ENCODE measurements at regions of chr1 and their contacts with region 1.

Region 1: DNA sequence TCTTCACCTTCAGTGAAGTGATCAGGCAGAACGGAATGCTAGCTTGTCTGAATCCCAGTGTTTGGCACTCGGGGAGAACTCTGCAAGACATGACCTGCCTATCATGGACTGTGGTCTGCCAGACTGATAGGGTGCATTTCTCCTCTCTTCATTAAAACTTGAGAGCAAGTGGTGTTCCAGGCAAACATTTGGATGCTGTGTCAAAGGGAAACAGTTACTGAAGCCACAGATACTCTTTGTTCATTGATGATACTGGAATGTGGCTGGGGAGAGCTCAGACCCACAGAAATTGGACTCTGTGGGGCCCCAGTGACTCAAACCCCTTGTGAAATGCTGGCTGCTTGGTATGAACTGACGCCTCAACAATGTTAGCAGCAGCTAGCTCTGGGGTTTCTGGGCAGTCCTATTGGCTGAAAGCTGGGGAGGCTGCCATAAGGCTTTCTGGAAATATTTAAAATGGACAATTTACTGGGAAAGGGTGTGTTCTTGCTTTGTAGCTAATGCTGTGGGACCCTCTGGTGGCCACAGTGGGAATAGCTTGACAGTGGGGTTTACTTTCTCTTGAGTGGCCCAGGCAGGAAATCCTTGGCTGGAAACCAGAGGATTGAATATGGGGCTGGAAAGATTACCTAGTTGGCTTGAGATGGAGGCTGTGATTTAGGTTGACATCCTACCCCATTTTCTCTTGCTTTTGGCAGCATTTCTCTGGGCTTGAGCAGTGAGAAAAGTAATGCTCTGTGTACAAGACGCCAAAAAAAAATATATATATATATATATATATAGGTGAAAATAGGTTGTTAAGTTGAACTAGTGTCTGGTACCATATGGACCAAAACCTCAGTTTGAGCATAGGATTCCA is 8.0 kb upstream of the S100A10 start:
- DNase-seq: peak; percentile 83
- H3K4me3 Mint-ChIP-seq: no peak overlapping the region
- H3K27ac Mint-ChIP-seq: no peak overlapping the region
- H3K4me1 Mint-ChIP-seq: peaks cover 11% of the 10 kb centered on the region
- H3K27me3 Mint-ChIP-seq: peaks cover 3% of the 10 kb centered on the region

Region 2: DNA sequence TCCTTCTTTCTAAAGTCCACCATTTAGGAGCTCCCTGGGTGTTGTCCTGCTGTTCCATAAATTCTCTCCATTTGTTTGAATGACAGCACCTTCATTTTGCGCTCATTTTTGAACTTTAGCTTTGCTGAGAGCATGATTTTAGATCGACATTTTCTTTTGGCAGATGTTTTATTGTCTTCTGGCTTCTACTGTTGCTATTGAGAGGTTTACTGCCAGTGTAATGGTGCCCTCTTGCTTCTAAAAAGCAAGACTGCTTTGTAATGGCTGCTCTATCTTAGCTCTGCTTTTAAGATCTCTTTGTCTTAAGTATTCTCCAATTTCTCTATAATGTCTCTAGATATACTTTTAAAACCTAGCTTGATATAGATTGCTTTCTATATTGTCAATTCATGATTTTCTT is 120.2 kb before region 1 on chr1:
- CTCF ChIA-PET with region 1: interaction called, 34 read pairs
- POLR2A ChIA-PET with region 1: no interaction called
- intact Hi-C with region 1: no loop called
- DNase-seq: no peak
- H3K4me3 Mint-ChIP-seq: no peak overlapping the region
- H3K27ac Mint-ChIP-seq: no peak overlapping the region
- H3K4me1 Mint-ChIP-seq: no peaks in the 10 kb centered on the region
- H3K27me3 Mint-ChIP-seq: no peaks in the 10 kb centered on the region

Region 3: GRCh38 chr1:151898513-151898991 is 103.1 kb before region 1 on chr1:
- CTCF ChIA-PET with region 1: interaction called, 20 read pairs
- POLR2A ChIA-PET with region 1: no interaction called
- intact Hi-C with region 1: no loop called
- DNase-seq: peak; percentile 57
- H3K4me3 Mint-ChIP-seq: peak overlapping the region; percentile 30
- H3K27ac Mint-ChIP-seq: peak overlapping the region; percentile 96
- H3K4me1 Mint-ChIP-seq: peaks cover 58% of the 10 kb centered on the region
- H3K27me3 Mint-ChIP-seq: no peaks in the 10 kb centered on the region

Region 4: DNA sequence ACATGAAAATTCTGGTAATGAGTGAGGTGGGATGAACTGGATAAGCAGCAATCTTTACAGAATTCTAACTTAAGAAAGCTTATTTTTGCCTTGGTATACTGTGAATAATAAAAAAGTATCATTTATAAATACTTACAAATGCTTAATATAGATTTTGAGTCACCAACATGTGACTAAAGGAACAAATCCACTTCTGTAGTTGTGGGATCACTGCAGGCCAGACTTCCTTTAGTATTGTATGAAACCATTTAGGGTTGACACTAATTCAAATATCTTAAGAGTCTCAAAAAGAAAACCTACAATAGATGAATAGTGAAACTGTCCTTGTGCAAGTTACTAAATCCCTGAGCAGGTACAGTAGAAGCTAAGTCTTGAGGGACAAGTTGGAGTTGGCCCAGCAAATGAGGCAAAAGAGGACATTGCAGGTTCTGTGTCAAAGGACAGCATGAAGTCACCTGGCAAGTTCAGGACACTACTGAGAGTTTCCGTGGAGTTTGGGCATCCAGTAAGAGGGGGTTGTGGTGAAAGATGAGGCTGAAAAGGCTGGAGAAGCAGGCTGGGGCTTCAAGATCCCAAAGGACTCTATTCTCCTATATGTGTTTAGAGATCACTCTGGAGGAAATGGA is 86.4 kb before region 1 on chr1:
- CTCF ChIA-PET with region 1: interaction called, 16 read pairs
- POLR2A ChIA-PET with region 1: interaction called, 4 read pairs
- intact Hi-C with region 1: no loop called
- DNase-seq: no peak
- H3K4me3 Mint-ChIP-seq: no peak overlapping the region
- H3K27ac Mint-ChIP-seq: no peak overlapping the region
- H3K4me1 Mint-ChIP-seq: peaks cover 2% of the 10 kb centered on the region
- H3K27me3 Mint-ChIP-seq: no peaks in the 10 kb centered on the region

Region 5: DNA sequence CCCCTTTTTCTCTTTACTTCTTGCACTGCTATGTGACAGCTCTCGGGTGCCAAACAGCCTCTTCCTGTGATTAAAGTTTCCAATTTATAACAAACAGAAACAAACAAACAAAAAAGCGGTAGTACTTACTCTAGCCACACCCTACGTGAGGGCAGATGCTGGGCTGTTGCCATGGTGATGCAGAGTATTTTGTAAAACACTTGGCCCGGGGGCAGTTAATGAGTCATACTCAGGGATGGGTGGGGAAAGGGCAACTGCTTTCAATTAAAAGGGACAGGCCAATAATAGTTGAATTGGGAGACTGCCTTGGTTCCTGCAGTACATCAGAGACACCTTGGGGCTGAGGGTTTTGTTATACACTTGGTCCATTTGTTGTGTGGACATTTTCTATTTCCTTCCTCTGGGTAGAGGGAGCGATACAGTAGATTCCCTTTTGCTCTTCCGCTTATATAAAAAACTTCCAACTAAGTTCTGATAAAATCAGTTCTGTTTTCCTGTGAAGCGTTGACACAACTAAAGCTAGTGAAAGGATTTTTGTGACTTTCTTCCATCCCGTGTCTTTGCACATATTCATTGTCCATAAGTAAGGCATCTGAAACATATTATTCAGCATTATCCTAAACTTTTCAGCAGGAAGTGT is 55.8 kb before region 1 on chr1:
- CTCF ChIA-PET with region 1: interaction called, 377 read pairs
- POLR2A ChIA-PET with region 1: interaction called, 4 read pairs
- intact Hi-C with region 1: no loop called
- DNase-seq: peak; percentile 88
- H3K4me3 Mint-ChIP-seq: peak overlapping the region; percentile 60
- H3K27ac Mint-ChIP-seq: peak overlapping the region; percentile 87
- H3K4me1 Mint-ChIP-seq: peaks cover 54% of the 10 kb centered on the region
- H3K27me3 Mint-ChIP-seq: no peaks in the 10 kb centered on the region

Region 6: GRCh38 chr1:151984313-151984956 is 17.2 kb before region 1 on chr1:
- CTCF ChIA-PET with region 1: interaction called, 40 read pairs
- POLR2A ChIA-PET with region 1: interaction called, 4 read pairs
- intact Hi-C with region 1: no loop called
- DNase-seq: peak; percentile 74
- H3K4me3 Mint-ChIP-seq: peak overlapping the region; percentile 24
- H3K27ac Mint-ChIP-seq: peak overlapping the region; percentile 85
- H3K4me1 Mint-ChIP-seq: peaks cover 67% of the 10 kb centered on the region
- H3K27me3 Mint-ChIP-seq: no peaks in the 10 kb centered on the region

Region 7: DNA sequence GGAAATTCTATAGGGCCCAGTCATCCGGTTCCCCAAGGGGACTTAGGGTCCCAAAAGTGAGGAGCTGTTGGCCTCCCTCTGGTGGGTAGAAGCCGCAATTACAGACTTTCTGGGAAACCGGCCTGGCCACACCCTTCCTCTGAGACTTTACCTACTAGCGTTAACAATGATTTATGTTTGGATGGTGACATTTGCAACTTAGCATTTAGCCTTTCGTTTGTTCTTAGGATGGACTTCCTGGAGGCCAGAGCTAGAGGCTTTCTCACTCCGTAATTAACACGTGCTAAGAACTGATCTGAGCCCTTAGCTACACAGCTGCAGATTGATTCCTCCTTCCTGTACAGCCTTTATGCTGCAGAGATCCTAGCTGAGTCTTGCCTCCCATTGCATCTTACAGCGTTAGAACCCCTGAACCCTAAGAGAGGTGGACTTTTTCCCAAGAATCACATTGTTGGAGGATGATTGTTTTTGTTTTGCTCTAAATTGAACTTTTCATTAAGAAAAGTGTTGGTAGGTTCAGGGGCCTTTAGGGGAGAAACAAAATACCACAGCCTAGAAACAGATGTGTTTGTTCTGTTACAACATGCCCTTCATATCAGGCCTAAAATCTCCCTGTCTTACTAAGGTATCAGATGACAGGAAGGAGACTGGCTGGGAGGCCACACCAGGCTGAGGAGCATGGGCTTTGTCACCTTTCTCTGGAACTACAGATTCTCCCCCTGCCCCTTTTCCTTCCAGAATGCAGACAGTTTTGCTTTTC is 33.2 kb after region 1 on chr1:
- CTCF ChIA-PET with region 1: interaction called, 45 read pairs
- POLR2A ChIA-PET with region 1: interaction called, 3 read pairs
- intact Hi-C with region 1: no loop called
- DNase-seq: peak; percentile 83
- H3K4me3 Mint-ChIP-seq: peak overlapping the region; percentile 83
- H3K27ac Mint-ChIP-seq: peak overlapping the region; percentile 100
- H3K4me1 Mint-ChIP-seq: peaks cover 43% of the 10 kb centered on the region
- H3K27me3 Mint-ChIP-seq: no peaks in the 10 kb centered on the region

Region 8: GRCh38 chr1:152198982-152199381 is 197.4 kb after region 1 on chr1:
- CTCF ChIA-PET with region 1: no interaction called
- POLR2A ChIA-PET with region 1: no interaction called
- intact Hi-C with region 1: no loop called
- DNase-seq: no peak
- H3K4me3 Mint-ChIP-seq: no peak overlapping the region
- H3K27ac Mint-ChIP-seq: no peak overlapping the region
- H3K4me1 Mint-ChIP-seq: no peaks in the 10 kb centered on the region
- H3K27me3 Mint-ChIP-seq: peaks cover 16% of the 10 kb centered on the region